ENCODE measurements at regions of chr21 and their contacts with region 1.

Region 1: GRCh38 chr21:31900121-31900895 is 27.5 kb downstream of the HUNK start:
- DNase-seq: peak; percentile 99
- ATAC-seq: peak; percentile 99
- H3K4me3 ChIP-seq: peak overlapping the region; percentile 30 to 67 (median 57)
- H3K27ac ChIP-seq: peak overlapping the region; percentile 97
- H3K4me1 ChIP-seq: peaks cover 82% of the 10 kb centered on the region
- H3K27me3 ChIP-seq: no peaks in the 10 kb centered on the region
- CTCF ChIP-seq: no peak
- EP300 ChIP-seq: peak; percentile 29 to 59; a peak in 2 of 4 replicates
- POLR2A ChIP-seq: peak; percentile 55 to 75
- RAD21 ChIP-seq: no peak

Region 2: DNA sequence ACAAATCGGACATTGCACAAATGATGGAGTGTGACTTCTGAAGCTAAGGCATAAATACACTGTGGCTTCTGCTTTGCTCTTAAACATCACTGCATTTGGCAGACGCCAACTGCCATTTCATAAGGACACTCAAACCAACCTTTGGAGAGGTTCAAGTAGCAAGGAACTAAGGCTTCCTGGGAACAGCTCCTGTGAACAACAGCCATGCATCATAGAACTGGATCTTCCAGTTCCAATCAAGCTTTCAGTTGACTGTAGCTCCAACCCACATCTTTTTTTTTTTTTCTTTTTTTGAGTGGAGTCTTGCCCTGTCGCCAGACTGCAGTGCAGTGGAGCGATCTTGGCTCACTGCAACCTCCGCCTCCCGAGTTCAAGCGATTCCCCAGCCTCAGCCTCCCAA is 38.2 kb before region 1 on chr21:
- CTCF ChIA-PET with region 1: no interaction called
- POLR2A ChIA-PET with region 1: no interaction called
- in situ Hi-C with region 1: no loop called
- intact Hi-C with region 1: no loop called
- DNase-seq: no peak
- ATAC-seq: no peak
- H3K4me3 ChIP-seq: no peak overlapping the region
- H3K27ac ChIP-seq: no peak overlapping the region
- H3K4me1 ChIP-seq: no peaks in the 10 kb centered on the region; the same call in 1 of the 2 replicates
- H3K27me3 ChIP-seq: no peaks in the 10 kb centered on the region; a peak in 2 of 5 replicates
- CTCF ChIP-seq: no peak
- EP300 ChIP-seq: no peak
- POLR2A ChIP-seq: no peak
- RAD21 ChIP-seq: no peak

Region 3: DNA sequence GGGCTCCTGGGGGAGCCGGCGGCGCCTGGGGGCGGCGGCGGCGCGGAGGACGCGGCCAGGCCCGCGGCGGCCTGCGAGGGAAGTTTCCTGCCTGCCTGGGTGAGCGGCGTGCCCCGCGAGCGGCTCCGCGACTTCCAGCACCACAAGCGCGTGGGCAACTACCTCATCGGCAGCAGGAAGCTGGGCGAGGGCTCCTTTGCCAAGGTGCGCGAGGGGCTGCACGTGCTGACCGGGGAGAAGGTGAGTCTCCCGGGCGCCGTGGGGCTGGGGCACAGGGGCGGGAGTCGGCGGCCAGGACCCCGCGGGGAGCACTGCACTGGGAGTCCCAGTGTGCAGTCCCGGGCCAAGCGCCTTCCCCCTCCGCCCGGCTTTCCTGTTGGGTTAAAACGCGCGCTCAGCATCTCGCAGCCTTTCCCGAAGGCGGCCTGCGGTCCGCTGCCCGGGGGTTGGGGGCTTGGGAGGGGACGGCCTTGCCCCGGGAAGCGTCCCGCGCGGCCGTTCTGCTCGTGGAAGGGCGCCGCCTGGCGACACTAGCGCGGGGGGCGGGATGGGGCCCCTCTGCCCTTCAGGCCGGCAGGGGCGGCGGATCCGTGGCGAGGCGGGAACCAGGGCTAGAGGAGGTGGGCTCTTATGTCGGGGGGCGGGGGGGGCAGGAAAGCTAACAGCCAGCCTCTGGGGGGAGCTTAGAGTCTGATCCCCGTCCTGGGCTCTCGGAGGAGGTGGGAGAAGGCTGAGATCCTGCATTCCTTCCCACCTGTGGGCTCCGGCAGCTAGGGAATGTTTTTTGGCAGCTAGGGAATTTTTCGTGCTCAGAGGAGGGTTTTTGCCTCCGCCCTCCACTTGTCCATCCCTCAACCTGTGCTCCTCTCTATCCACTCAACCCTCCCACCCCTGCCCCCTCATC is 26.4 kb before region 1 on chr21:
- CTCF ChIA-PET with region 1: interaction called, 3 read pairs
- POLR2A ChIA-PET with region 1: interaction called, 18 read pairs
- in situ Hi-C with region 1: loop called (anchors 5 kb)
- intact Hi-C with region 1: loop called (anchors 2 kb)
- DNase-seq: no peak
- ATAC-seq: peak; percentile 75
- H3K4me3 ChIP-seq: peak overlapping the region; percentile 59 to 84 (median 73); a peak in 5 of 6 replicates
- H3K27ac ChIP-seq: no peak overlapping the region
- H3K4me1 ChIP-seq: peaks cover 55% of the 10 kb centered on the region
- H3K27me3 ChIP-seq: peaks cover 0 to 15% of the 10 kb centered on the region in 2 experiments; a peak in 2 of 5 replicates
- CTCF ChIP-seq: peak; percentile 80
- EP300 ChIP-seq: no peak
- POLR2A ChIP-seq: no peak
- RAD21 ChIP-seq: peak; percentile 67

Region 4: GRCh38 chr21:31888936-31889371 is 11.4 kb before region 1 on chr21:
- CTCF ChIA-PET with region 1: no interaction called
- POLR2A ChIA-PET with region 1: interaction called, 13 read pairs
- in situ Hi-C with region 1: no loop called
- intact Hi-C with region 1: no loop called
- DNase-seq: no peak
- ATAC-seq: no peak
- H3K4me3 ChIP-seq: no peak overlapping the region
- H3K27ac ChIP-seq: no peak overlapping the region
- H3K4me1 ChIP-seq: peaks cover 65% of the 10 kb centered on the region
- H3K27me3 ChIP-seq: no peaks in the 10 kb centered on the region
- CTCF ChIP-seq: no peak
- EP300 ChIP-seq: no peak
- POLR2A ChIP-seq: no peak
- RAD21 ChIP-seq: no peak

Region 5: GRCh38 chr21:31927689-31928353 is 27.5 kb after region 1 on chr21:
- CTCF ChIA-PET with region 1: no interaction called
- POLR2A ChIA-PET with region 1: interaction called, 22 read pairs
- in situ Hi-C with region 1: no loop called
- intact Hi-C with region 1: loop called (anchors 2 kb)
- DNase-seq: no peak
- ATAC-seq: no peak
- H3K4me3 ChIP-seq: no peak overlapping the region
- H3K27ac ChIP-seq: peak overlapping the region; percentile 25
- H3K4me1 ChIP-seq: peaks cover 53% of the 10 kb centered on the region
- H3K27me3 ChIP-seq: no peaks in the 10 kb centered on the region
- CTCF ChIP-seq: no peak
- EP300 ChIP-seq: no peak
- POLR2A ChIP-seq: no peak
- RAD21 ChIP-seq: no peak

Measured in HepG2 (cell line).